ENCODE measurements at regions of chr7 and their contacts with region 1.

Region 1: GRCh38 chr7:55964261-55965099 is at the start of gene NIPSNAP2:
- DNase-seq: peak; percentile 89
- CTCF ChIP-seq: peak; percentile 91

Region 2: DNA sequence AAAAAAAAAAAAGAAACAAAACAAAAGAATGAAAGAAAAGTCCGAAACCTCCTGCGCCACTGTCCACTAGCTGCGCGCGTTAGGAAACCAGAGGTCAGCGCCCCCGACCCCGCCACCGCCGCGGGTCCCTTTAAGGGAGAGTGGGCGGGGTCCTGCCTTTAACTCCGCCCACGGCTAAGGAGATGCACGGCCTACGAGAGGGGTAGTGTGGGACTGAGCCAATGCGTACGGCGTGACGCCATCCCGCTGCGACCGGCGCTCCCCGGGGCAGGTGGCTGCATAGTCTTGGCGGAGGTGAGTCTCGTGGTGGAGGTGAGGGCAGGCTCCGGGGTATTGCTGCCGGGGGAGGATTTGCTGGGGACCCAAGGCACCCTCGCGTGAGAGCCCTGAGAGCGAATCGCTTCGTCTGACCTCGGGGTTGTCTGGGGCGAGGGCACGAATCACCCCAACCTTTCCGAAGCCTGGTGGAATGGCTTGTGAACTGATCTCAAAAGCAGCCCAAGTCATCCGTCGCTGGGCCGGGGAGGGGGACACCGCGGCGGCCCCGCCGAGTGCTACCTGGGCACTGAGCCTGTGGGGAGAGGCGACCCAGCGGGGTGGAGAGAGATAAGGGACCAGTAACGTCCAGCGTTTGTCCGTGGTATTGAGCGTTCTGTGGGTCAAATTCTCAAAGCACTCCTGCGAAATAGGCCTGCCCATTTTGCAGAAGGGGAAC is 12.7 kb before region 1 on chr7 and contains the start of gene MRPS17:
- CTCF ChIA-PET with region 1: interaction called, 25 read pairs
- POLR2A ChIA-PET with region 1: no interaction called
- DNase-seq: peak; percentile 99
- CTCF ChIP-seq: no peak

Region 3: GRCh38 chr7:55983537-55983936 is 19.1 kb after region 1 on chr7:
- CTCF ChIA-PET with region 1: interaction called, 11 read pairs
- POLR2A ChIA-PET with region 1: no interaction called
- DNase-seq: no peak
- CTCF ChIP-seq: no peak

Measured in GM10248 (cell line).